ENCODE measurements at regions of chr17 and their contacts with region 1.

Region 1: DNA sequence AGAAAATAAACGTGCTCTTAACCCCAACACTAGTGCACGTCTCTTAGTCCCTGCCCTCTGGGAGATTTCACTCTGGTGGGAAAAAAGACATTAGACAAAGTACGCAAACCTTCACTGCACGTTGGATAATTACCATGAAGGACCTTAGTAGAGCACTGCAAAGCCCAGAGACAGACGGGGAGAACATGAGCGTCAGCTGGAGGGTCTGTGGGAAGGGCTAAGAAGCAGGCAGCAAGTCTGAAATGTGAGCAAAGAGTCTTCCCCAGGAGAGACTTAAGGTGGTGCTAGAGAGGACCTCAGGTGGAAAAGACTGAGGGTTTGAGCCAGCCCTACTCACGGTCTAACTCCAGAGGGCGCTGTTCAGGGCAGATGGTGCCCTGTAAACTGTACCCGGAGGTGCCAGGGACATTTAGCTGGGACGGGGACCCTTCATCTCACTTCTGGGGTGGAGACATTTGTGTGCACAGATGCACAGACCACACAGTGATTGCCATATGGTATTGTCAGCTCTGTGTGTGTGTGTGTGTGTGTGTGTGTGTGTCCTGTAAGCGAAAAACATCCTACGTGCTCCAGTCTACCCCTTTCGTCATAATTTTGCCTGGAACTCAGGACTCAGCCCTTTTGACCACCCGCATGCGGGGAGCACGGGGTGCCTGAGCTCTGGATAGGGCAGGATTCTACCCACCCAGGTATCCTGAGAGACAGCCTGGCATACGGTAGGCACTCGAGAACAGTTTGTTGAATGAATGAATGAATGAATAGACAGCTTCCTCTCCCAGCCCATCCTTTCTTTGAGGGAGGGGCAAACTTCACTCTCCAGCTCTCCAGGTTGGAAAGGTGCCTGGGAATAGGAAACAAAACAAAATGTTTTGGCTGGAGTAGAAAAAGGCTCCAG is 10.1 kb upstream of the STAC2 start:
- DNase-seq: no peak
- ATAC-seq: peak in 1 of 2 donors; percentile 36
- H3K4me3 ChIP-seq: no peak overlapping the region
- H3K27ac ChIP-seq: no peak overlapping the region
- H3K4me1 ChIP-seq: no peaks in the 10 kb centered on the region
- H3K27me3 ChIP-seq: no peaks in the 10 kb centered on the region

Region 2: DNA sequence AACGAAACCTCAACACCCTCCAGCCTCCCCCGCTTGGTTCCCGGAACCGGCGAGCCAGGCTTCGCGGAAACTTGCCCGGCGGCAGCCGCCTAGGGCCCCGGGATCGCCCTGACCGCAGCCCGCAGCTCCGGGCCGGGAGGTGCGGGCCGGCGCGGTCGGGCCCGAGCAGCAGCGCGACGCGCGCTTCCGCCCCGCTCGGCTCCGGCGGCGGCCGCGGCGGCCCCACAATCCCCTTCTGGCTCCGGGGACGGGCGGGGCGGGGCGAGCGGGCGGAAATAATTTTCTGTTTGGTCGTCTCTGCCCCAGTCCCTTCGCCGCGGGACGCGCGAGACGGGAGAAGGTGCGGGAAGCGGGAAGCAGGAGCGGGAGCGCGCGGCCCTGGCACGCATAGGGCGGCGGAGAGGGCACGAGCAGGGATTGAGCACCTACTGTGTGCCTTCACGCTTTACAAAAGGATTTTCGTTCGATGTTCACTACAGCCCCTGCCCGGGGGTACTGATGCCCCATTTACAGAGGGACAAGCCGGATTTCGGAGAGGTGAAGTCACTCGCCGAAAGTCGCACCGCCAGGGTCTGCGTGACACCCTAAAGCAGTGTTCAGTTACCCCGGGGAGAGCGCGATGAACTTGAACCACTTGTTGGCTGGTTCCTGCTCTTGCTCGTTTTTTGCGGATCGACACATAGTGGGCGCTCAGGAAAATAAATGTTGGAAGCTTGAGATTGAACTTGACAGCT is 533.5 kb before region 1 on chr17:
- intact Hi-C with region 1: no loop called
- DNase-seq: peak; percentile 88 to 95 (median 95)
- ATAC-seq: peak; percentile 68 to 81
- H3K4me3 ChIP-seq: peak overlapping the region; percentile 97
- H3K27ac ChIP-seq: peak overlapping the region; percentile 98
- H3K4me1 ChIP-seq: peaks cover 7% of the 10 kb centered on the region
- H3K27me3 ChIP-seq: no peaks in the 10 kb centered on the region

Region 3: GRCh38 chr17:39057701-39058206 is 178.0 kb before region 1 on chr17:
- intact Hi-C with region 1: loop called in 1 of 4 experiments (anchors 5 kb)
- DNase-seq: no peak
- ATAC-seq: no peak
- H3K4me3 ChIP-seq: peak overlapping the region; percentile 10
- H3K27ac ChIP-seq: no peak overlapping the region
- H3K4me1 ChIP-seq: peaks cover 3% of the 10 kb centered on the region
- H3K27me3 ChIP-seq: no peaks in the 10 kb centered on the region

Region 4: DNA sequence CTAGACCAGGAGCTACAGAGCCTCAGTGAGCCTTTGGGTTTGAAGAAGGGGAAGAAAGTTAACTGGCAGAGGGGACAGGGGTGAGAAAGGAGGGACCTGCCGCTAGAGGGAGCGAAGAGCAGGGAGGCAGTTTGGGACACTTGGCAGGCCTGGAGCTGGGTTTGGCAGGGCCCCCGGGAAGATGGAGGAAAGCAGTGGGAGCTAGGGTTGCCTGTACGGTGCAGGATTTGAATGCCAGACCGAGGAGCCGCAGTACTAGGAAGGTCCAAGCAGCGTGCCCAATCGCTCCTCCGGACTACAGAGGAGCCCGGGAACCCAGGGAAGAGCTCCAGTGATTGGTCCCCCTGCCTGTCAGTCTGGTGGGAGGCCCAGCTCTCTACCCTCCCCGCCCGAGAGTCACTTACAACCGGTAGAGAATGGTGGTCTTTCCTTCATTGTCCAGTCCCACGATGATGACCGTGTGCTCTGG is 71.1 kb before region 1 on chr17:
- intact Hi-C with region 1: loop called in 1 of 4 experiments (anchors 10 kb)
- DNase-seq: peak; percentile 94 to 97 (median 96)
- ATAC-seq: peak; percentile 95
- H3K4me3 ChIP-seq: peak overlapping the region; percentile 44
- H3K27ac ChIP-seq: no peak overlapping the region
- H3K4me1 ChIP-seq: no peaks in the 10 kb centered on the region
- H3K27me3 ChIP-seq: no peaks in the 10 kb centered on the region